A549 (cell line): ENCODE measurements at regions of chr11 and their contacts with region 1.

Region 1: GRCh38 chr11:119323538-119324033 is 6.7 kb upstream of the MCAM start:
- DNase-seq: peak in 1 of 2 experiments; percentile 63
- ATAC-seq: peak in 1 of 2 experiments; percentile 41; a peak in 3 of 6 replicates
- H3K4me3 ChIP-seq: no peak overlapping the region
- H3K27ac ChIP-seq: no peak overlapping the region
- H3K4me1 ChIP-seq: peaks cover 22% of the 10 kb centered on the region
- CTCF ChIP-seq: peak; percentile 69
- EP300 ChIP-seq: no peak
- POLR2A ChIP-seq: no peak
- RAD21 ChIP-seq: peak; percentile 47 to 64; a peak in 4 of 5 replicates

Region 2: DNA sequence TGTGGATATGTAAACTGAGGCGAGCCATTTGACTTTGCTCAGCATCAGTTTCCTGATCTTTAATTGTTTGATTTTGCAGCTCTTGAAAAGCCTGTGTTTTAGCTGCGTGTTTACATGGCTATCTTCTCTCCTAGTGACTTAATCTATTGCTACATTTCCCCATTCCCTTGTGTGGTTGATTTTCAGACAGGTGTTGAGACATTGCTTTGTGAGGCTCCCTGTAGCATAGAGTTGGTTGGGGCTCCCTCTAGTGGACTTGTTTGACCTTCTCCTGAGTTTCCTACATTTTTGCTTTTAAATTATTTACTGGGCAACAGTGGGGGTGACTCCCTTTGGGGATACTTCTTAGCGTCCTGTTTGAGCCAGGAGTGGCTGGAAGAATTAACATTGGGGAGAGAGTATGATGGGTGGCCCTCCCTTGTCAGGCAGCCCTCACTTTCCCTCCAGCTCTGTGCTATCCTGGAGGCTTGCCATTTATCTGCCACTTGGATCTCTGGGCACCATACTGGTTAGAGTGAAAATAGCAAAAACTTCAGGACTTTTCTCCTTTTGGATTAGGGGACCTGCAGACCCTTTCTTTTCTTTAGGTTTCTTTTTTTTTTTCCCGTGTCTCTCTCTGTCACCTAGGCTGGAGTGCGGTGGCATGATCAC is 126.6 kb before region 1 on chr11:
- CTCF ChIA-PET with region 1: interaction called, 16 read pairs
- POLR2A ChIA-PET with region 1: no interaction called
- DNase-seq: peak; percentile 80 to 82
- ATAC-seq: peak; percentile 88 to 89
- H3K4me3 ChIP-seq: no peak overlapping the region
- H3K27ac ChIP-seq: no peak overlapping the region
- H3K4me1 ChIP-seq: no peaks in the 10 kb centered on the region
- CTCF ChIP-seq: peak; percentile 76
- EP300 ChIP-seq: no peak
- POLR2A ChIP-seq: no peak
- RAD21 ChIP-seq: peak; percentile 68 to 80

Region 3: GRCh38 chr11:119290894-119291497 is 32.6 kb before region 1 on chr11:
- CTCF ChIA-PET with region 1: interaction called, 15 read pairs
- POLR2A ChIA-PET with region 1: no interaction called
- DNase-seq: no peak
- ATAC-seq: no peak
- H3K4me3 ChIP-seq: no peak overlapping the region
- H3K27ac ChIP-seq: no peak overlapping the region
- H3K4me1 ChIP-seq: no peaks in the 10 kb centered on the region
- CTCF ChIP-seq: no peak
- EP300 ChIP-seq: no peak
- POLR2A ChIP-seq: no peak
- RAD21 ChIP-seq: no peak

Region 4: DNA sequence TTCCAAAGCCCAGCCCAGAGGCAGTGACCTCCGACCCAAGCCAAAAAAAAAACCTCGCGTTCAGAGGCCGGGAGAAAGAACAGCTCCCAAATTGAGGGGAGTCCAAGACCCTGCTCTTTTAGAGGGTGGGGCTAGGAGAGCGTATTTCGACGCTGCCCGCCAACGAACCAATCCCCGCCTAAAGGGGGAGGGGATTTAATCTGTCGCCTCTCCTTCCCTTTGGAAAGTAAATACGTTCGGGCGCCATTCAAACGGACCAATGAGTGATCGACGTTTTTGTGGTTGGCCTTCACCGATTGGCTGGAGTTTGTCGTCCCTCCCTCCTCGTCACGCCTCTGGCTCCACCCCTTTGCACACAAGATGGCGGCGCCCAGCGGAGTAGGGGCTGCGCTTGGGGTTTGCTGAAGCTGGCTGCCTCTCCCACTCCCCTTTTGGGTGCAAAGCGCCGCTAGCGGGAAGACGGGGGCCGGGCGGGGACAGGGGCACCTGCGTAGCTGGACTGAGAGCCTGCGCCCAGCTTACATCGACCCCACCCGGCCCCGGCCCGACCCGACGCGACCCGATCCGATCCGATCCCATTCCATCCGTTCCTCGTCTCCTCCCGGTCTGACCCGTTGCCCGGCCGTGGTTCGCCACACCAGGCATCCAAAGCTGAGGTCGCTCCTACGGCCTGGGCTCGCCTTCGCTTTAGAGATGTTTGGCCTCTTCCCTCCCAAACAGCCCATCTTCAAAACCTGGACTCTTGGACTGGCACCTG is 10.8 kb after region 1 on chr11 and contains the start of gene RNF26:
- CTCF ChIA-PET with region 1: interaction called, 160 read pairs
- POLR2A ChIA-PET with region 1: no interaction called
- DNase-seq: peak; percentile 96 to 97
- ATAC-seq: peak; percentile 81 to 89
- H3K4me3 ChIP-seq: peak within 1 kb of the TSS; percentile 72
- H3K27ac ChIP-seq: peak within 1 kb of the TSS; percentile 79 to 94
- H3K4me1 ChIP-seq: peaks cover 19% of the 10 kb centered on the region
- CTCF ChIP-seq: no peak
- EP300 ChIP-seq: no peak
- POLR2A ChIP-seq: peak; percentile 53
- RAD21 ChIP-seq: no peak
- polyA plus RNA-seq, gene RNF26: 23.5 and 28.4 TPM in 2 replicates

Region 5: DNA sequence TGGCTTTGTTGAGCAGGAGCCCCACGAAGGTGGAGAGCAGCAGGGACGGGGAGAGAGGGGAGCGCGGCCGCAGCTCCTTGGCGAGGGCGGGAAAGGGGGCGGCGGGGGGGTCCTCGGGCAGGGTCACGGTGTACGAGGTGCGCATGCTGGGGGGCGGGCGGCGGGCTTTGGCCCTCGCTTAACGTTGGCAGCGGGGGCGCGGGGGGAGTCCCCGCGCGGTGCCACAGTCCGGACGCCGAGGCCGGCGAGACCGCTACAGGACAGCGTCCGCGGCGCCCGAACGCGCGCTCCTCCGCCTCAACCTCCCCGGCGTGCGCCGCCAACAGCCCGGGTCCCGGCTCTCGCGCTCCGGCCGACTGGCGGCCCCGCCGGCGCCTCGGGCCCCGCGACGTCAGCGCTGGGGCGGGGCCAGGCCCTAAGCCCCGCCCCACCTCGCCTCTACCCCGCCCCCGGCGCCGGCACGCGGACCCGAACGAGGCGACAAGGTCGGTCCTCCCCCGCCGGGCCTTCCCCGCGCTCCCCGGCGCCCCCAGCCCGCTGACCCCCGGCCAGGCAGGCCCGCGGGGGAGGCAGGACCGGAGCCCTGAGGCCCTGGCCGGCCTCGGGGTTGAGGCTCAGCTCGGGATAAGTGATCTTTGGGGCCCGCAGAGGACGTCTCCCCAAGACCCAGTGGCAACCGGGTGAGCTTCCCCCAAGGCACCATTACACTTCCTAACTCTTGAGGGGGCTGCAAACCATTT is 40.4 kb after region 1 on chr11:
- CTCF ChIA-PET with region 1: interaction called, 14 read pairs
- POLR2A ChIA-PET with region 1: no interaction called
- DNase-seq: peak in 1 of 2 experiments; percentile 31
- ATAC-seq: peak in 1 of 2 experiments; percentile 49; a peak in 3 of 6 replicates
- H3K4me3 ChIP-seq: peak overlapping the region; percentile 50
- H3K27ac ChIP-seq: peak overlapping the region; percentile 74 to 91
- H3K4me1 ChIP-seq: peaks cover 73% of the 10 kb centered on the region
- CTCF ChIP-seq: no peak
- EP300 ChIP-seq: no peak
- POLR2A ChIP-seq: no peak
- RAD21 ChIP-seq: no peak

Region 6: DNA sequence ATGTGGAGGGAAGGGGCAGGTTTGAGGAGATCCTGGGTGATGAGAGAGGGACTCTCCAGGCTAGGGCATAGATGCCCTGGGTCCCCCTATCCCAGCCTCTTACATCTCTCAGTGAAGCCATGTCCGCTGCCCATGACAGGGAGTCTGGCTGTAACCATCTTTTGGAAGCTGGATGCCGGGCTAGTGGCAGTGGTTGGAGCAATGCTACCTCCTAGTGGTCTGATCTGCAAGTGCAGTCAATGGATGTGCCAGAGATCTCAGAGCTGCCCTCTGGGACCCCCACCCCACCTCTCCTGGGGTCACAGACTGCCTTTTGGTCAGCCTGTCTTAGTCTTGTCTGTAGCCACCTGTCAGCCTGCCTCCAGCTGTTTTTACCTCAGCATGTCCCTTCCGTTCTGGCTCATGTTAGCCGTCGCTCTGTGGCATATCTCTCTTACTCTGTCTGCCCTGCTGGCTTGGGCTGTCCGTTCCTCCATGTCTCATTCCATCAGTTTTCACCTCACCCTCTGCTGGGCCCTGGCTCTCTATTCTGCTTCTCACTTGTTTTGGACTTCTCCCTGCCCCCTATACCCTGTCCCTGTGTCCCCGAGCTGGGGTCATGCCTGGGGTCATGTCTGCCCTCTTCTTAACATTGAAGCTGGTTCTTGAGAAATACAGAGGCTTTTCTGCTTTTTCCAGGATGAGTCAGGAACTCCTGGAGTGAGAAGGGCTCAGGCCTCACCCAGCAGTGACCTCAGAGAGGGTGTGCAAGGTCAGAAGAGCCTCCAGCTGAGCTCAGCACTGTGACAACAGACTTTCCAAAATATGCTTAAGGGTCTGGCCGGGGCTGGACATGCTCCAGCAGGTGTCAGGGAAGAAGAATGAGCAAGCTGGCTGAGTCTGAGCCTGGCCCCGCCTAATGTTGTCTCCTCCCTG is 151.4 kb after region 1 on chr11:
- CTCF ChIA-PET with region 1: interaction called, 31 read pairs
- POLR2A ChIA-PET with region 1: no interaction called
- DNase-seq: peak; percentile 42 to 62
- ATAC-seq: peak; percentile 70 to 90; a peak in 5 of 6 replicates
- H3K4me3 ChIP-seq: no peak overlapping the region
- H3K27ac ChIP-seq: peak overlapping the region in 1 of 2 experiments; percentile 64; a peak in 1 of 6 replicates
- H3K4me1 ChIP-seq: 0 out of 3 replicates have a peak, but pooled peaks cover 3% of the 10 kb centered on the region
- CTCF ChIP-seq: peak; percentile 74
- EP300 ChIP-seq: no peak
- POLR2A ChIP-seq: no peak
- RAD21 ChIP-seq: peak; percentile 84 to 88